ENCODE measurements at regions of chr11 and their contacts with region 1.

Region 1: DNA sequence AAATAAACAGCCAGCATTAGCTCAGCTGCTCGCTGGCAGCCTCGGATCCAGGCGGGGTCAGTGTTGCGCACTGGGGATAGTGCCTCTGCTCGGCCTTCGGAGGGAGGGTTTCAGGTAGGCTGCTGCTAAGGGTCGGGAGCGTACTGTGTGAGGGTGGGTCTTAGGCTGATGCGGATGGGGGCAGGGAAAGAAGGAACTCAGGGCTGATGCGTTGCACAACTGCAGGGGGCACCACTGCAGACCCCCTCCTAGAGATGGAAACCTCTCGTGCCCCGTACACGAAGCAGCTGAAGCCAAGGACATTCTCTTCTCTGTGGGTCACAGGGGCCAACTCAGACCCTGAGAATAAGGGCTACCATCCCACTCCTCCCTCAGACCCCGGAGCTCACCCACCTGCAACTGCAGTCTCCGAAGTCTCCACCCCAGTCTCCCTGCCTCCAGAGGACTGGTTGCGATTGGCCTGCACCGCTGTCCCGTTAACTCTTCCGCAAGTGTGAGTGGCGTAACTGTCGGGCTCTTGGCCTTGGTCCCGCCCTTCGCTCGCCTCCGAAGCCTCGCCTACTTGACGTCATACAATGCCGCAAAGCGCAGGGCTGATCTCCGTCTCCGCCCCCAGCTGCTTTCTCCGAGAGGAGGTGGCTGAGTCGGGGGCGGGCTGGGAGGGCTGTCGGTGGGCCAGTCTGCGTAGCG is at the start of gene KBTBD3:
- DNase-seq: peak; percentile 99 to 100 (median 99)
- H3K4me3 ChIP-seq: peak within 1 kb of the TSS; percentile 41 to 88 (median 70)
- H3K27ac ChIP-seq: peak within 1 kb of the TSS; percentile 83 to 97 (median 97)
- H3K4me1 ChIP-seq: peaks cover 6 to 35% of the 10 kb centered on the region in 2 donors
- H3K27me3 ChIP-seq: no peaks in the 10 kb centered on the region
- CTCF ChIP-seq: peak in 3 of 6 experiments; percentile 14 to 41 (median 28)
- POLR2A ChIP-seq: peak; percentile 94 to 99
- total RNA-seq, gene KBTBD3: 0.97 to 13.3 (median 7.0) TPM

Region 2: GRCh38 chr11:106021967-106022794 is 54.9 kb before region 1 on chr11 and contains the start of gene MSANTD4:
- intact Hi-C with region 1: loop called in 1 of 2 experiments (anchors 10 kb)
- DNase-seq: peak; percentile 99 to 100 (median 100)
- H3K4me3 ChIP-seq: peak within 1 kb of the TSS; percentile 39 to 97 (median 53)
- H3K27ac ChIP-seq: peak within 1 kb of the TSS in 4 of 5 donors; percentile 14 to 86 (median 64)
- H3K4me1 ChIP-seq: peaks cover 0 to 24% of the 10 kb centered on the region in 2 donors
- H3K27me3 ChIP-seq: no peaks in the 10 kb centered on the region
- CTCF ChIP-seq: peak in 2 of 6 experiments; percentile 19 to 20
- POLR2A ChIP-seq: peak; percentile 39 to 50
- total RNA-seq, gene MSANTD4: 5.0 to 36.2 (median 19.3) TPM

Region 3: GRCh38 chr11:106121570-106122320 is 44.7 kb after region 1 on chr11:
- intact Hi-C with region 1: no loop called
- DNase-seq: no peak
- H3K4me3 ChIP-seq: no peak overlapping the region
- H3K27ac ChIP-seq: no peak overlapping the region
- H3K4me1 ChIP-seq: no peaks in the 10 kb centered on the region
- H3K27me3 ChIP-seq: no peaks in the 10 kb centered on the region
- CTCF ChIP-seq: no peak
- POLR2A ChIP-seq: no peak

Region 4: DNA sequence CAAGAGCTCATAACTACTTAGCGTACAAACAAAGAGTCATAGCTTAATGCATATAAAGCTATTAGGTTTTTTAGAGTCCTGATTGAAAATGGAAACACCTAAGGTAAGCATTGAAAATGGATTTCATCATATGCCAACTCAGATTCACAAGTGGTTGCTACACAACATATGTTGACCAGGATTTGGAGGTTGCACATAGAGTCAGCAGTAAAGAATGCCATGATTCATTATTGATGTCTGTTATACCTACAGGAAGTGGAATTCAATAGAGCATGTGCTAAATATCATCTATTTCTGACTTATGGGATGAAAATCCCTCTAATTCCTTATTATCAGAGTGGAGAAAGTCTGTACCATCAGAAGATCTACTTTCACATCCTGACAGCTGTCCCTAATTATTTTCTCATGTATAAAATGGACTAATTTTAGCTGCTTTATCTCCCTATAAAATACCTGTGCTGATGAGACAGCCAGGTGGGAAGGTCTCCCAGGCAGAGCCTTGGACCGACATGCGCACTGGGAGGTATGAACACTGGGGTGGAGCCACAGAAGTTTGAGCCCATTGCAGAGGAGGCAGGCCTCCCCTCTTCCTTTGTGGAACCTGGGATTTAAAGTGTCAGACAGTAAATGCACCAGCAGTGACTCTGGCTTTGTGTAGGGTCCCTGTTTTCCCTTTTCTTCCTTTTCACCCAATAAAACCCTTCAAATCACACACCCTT is 204.6 kb after region 1 on chr11:
- intact Hi-C with region 1: no loop called
- DNase-seq: no peak
- H3K4me3 ChIP-seq: no peak overlapping the region
- H3K27ac ChIP-seq: no peak overlapping the region
- H3K4me1 ChIP-seq: no peaks in the 10 kb centered on the region
- H3K27me3 ChIP-seq: no peaks in the 10 kb centered on the region
- CTCF ChIP-seq: no peak
- POLR2A ChIP-seq: no peak

Measured in adrenal gland (tissue), 19 donors.